Activated CD4-positive, alpha-beta T cell treated with anti-CD3 and anti-CD28 coated beads, Interleukin-2, amount 10 ng/mL, durations not matched to agents 24 days and 14 days (primary cell): ENCODE measurements at regions of chr9 and their contacts with region 1.

Region 1: DNA sequence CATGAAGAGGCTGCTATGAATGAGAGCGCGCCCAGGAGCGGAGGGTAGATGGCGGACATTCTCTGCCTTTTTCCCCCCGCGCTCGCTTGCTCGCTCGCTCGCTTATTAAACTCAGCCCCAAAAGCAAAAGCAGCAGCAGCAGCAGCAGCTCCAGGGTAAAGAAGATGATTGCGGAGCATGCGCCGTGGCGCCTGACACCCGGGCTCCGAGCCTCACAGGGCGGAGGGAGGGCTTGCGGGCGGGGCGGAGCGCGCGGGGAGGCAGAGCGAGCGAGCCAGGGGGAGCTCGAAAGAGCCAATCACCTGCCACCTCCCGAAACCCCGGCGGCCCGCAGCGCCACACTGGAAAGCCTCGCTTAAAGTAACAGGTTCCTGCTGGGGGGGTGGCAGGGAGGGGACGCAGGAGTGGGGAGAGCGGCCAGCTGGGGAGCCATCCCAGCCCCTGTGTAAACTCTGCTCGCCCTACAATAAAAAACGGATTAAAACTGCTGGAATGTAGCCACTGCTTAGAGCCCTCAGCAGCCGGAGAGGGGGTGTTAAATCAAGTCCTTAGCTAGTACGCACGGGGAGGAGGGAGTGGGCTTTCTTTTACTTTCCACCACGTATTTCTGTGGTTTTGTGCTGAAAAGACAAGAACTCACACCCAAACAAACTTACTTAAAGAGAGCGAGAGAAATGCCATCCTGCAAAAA is at the start of gene MLLT3:
- DNase-seq: peak; percentile 99
- H3K4me3 Mint-ChIP-seq: peak within 1 kb of the TSS; percentile 92
- H3K27ac Mint-ChIP-seq: peak within 1 kb of the TSS; percentile 98
- H3K4me1 Mint-ChIP-seq: peaks cover 44% of the 10 kb centered on the region
- H3K27me3 Mint-ChIP-seq: no peaks in the 10 kb centered on the region
- total RNA-seq, gene MLLT3: 26.5 and 27.8 TPM in 2 replicates

Region 2: DNA sequence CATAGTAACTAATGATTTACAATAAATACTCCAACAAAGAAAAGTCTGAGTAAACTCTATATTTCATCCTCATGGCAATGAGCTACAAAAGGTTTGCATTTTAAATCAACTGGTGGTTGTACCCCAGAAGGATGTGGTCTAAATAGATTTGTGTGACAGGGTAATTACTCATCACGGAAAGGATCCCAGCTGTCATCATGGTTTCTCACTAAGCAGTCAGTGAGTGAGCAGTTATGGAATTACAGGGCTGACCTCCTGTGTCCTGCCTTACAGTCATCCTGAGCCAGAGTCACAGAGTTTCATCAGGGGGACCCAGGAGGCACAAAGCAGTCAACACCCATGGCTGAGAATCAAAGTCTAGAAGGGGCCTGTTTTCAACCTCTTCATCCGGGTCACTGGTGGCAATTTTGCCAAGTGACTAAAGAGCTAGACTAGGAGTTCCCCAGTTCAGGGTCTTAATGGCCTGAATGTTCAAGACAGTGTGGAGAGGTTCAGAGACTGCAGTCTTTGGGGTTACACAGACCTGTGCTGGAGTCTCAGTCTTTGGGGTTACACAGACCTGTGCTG is 622.9 kb before region 1 on chr9:
- intact Hi-C with region 1: loop called (anchors 2 kb)
- DNase-seq: peak; percentile 88
- H3K4me3 Mint-ChIP-seq: peak overlapping the region; percentile 74
- H3K27ac Mint-ChIP-seq: peak overlapping the region; percentile 99
- H3K4me1 Mint-ChIP-seq: peaks cover 53% of the 10 kb centered on the region
- H3K27me3 Mint-ChIP-seq: no peaks in the 10 kb centered on the region

Region 3: GRCh38 chr9:20170122-20170521 is 452.4 kb before region 1 on chr9:
- intact Hi-C with region 1: no loop called
- DNase-seq: no peak
- H3K4me3 Mint-ChIP-seq: no peak overlapping the region
- H3K27ac Mint-ChIP-seq: no peak overlapping the region
- H3K4me1 Mint-ChIP-seq: peaks cover 3% of the 10 kb centered on the region
- H3K27me3 Mint-ChIP-seq: peaks cover 5% of the 10 kb centered on the region

Region 4: DNA sequence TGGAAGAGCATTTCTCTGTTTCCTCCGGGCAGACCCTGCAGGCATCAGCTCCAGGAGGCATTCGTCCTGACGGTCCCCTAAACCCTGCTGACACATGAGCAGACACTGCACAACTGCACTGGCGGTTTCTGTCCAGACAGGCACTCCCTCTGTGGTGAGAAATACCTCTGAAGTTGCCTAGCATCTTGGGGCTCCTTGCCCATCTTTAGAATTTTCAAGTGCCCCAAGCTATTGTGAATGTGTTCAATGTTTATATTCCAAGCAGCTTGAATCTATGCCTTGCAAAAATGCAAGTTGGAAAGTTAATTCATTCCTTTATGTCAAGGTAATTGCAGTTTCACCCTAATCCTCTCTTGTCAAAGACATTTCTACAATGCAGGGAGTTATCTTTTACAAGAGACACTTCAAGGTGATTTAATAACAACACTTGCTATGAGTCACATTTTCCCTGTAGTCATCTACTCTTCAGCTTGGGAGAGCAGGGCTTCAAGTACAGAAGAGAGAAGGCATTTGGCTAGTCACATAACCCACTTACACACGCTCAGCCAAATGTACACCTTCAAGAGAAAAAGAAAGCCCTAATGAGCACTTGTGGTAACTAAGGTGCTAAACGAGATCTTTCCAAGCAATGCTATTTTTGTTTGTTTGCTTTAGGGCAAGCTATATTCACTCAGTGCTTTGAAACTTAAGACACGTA is 302.7 kb before region 1 on chr9:
- intact Hi-C with region 1: loop called (anchors 1 kb)
- DNase-seq: peak; percentile 80
- H3K4me3 Mint-ChIP-seq: peak overlapping the region; percentile 60
- H3K27ac Mint-ChIP-seq: peak overlapping the region; percentile 94
- H3K4me1 Mint-ChIP-seq: peaks cover 78% of the 10 kb centered on the region
- H3K27me3 Mint-ChIP-seq: no peaks in the 10 kb centered on the region

Region 5: GRCh38 chr9:20508242-20508641 is 114.2 kb before region 1 on chr9:
- intact Hi-C with region 1: loop called (anchors 2 kb)
- DNase-seq: peak; percentile 79
- H3K4me3 Mint-ChIP-seq: peak overlapping the region; percentile 61
- H3K27ac Mint-ChIP-seq: peak overlapping the region; percentile 77
- H3K4me1 Mint-ChIP-seq: peaks cover 67% of the 10 kb centered on the region
- H3K27me3 Mint-ChIP-seq: no peaks in the 10 kb centered on the region

Region 6: GRCh38 chr9:20683351-20684034 is 61.0 kb after region 1 on chr9:
- intact Hi-C with region 1: loop called (anchors 1 kb)
- DNase-seq: peak; percentile 80
- H3K4me3 Mint-ChIP-seq: peak overlapping the region; percentile 90
- H3K27ac Mint-ChIP-seq: peak overlapping the region; percentile 92
- H3K4me1 Mint-ChIP-seq: peaks cover 20% of the 10 kb centered on the region
- H3K27me3 Mint-ChIP-seq: no peaks in the 10 kb centered on the region

Region 7: GRCh38 chr9:21031091-21031807 is 408.8 kb after region 1 on chr9 and contains the start of gene HACD4:
- intact Hi-C with region 1: loop called (anchors 2 kb)
- DNase-seq: peak; percentile 92
- H3K4me3 Mint-ChIP-seq: peak within 1 kb of the TSS; percentile 69
- H3K27ac Mint-ChIP-seq: peak within 1 kb of the TSS; percentile 78
- H3K4me1 Mint-ChIP-seq: peaks cover 11% of the 10 kb centered on the region
- H3K27me3 Mint-ChIP-seq: peaks cover 3% of the 10 kb centered on the region
- total RNA-seq, gene HACD4: 2.8 and 3.0 TPM in 2 replicates